Panc1 (cell line): ENCODE measurements at regions of chr17 and their contacts with region 1.

Region 1: GRCh38 chr17:59846394-59847165 is 46.2 kb downstream of the TUBD1 start:
- DNase-seq: peak; percentile 79
- ATAC-seq: peak; percentile 49
- H3K4me3 ChIP-seq: 0 out of 4 replicates have a peak overlapping the region, but pooled peaks of 1 of the 2 experiments have one; percentile 3
- H3K27ac ChIP-seq: peak overlapping the region; percentile 100
- H3K4me1 ChIP-seq: peaks cover 60% of the 10 kb centered on the region
- H3K27me3 ChIP-seq: no peaks in the 10 kb centered on the region
- CTCF ChIP-seq: no peak

Region 2: DNA sequence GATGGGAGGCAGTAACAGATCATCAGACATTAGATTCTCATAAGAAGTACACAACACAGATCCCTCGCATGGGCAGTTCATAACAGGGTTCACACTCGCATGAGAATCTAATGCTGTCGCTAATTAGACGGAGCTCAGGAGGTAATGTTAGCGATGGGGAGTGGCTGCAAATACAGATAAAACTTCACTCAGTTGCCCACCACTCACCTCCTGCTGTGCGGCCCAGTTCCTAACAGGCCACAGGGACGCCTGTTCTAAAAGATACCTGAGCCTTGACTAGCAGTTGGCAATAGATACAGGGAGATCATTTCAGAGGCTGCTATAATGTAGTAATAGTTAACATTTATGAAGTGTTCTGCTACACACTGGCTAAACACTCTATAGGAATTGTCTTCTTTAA is 144.3 kb before region 1 on chr17:
- CTCF ChIA-PET with region 1: no interaction called
- POLR2A ChIA-PET with region 1: interaction called, 5 read pairs
- in situ Hi-C with region 1: no loop called
- intact Hi-C with region 1: loop called (anchors 5 kb)
- DNase-seq: no peak
- ATAC-seq: no peak
- H3K4me3 ChIP-seq: no peak overlapping the region
- H3K27ac ChIP-seq: 0 out of 2 replicates have a peak overlapping the region, but pooled peaks have one; percentile 41
- H3K4me1 ChIP-seq: peaks cover 30% of the 10 kb centered on the region
- H3K27me3 ChIP-seq: no peaks in the 10 kb centered on the region
- CTCF ChIP-seq: no peak

Region 3: GRCh38 chr17:59753522-59754467 is 92.8 kb before region 1 on chr17:
- CTCF ChIA-PET with region 1: interaction called, 4 read pairs
- POLR2A ChIA-PET with region 1: interaction called, 7 read pairs
- in situ Hi-C with region 1: no loop called
- intact Hi-C with region 1: loop called (anchors 5 kb)
- DNase-seq: peak; percentile 83
- ATAC-seq: peak; percentile 64
- H3K4me3 ChIP-seq: no peak overlapping the region
- H3K27ac ChIP-seq: peak overlapping the region; percentile 100
- H3K4me1 ChIP-seq: peaks cover 63% of the 10 kb centered on the region
- H3K27me3 ChIP-seq: no peaks in the 10 kb centered on the region
- CTCF ChIP-seq: peak; percentile 67; the same call in 1 of the 2 replicates

Region 4: GRCh38 chr17:59769891-59770290 is 76.7 kb before region 1 on chr17:
- CTCF ChIA-PET with region 1: no interaction called
- POLR2A ChIA-PET with region 1: interaction called, 10 read pairs
- in situ Hi-C with region 1: no loop called
- intact Hi-C with region 1: no loop called
- DNase-seq: no peak
- ATAC-seq: 0 out of 2 replicates have a peak, but pooled peaks have one; percentile 26
- H3K4me3 ChIP-seq: no peak overlapping the region
- H3K27ac ChIP-seq: peak overlapping the region; percentile 89; the same call in 1 of the 2 replicates
- H3K4me1 ChIP-seq: peaks cover 21% of the 10 kb centered on the region
- H3K27me3 ChIP-seq: no peaks in the 10 kb centered on the region
- CTCF ChIP-seq: no peak

Region 5: GRCh38 chr17:59786536-59787319 is 59.9 kb before region 1 on chr17:
- CTCF ChIA-PET with region 1: no interaction called
- POLR2A ChIA-PET with region 1: interaction called, 12 read pairs
- in situ Hi-C with region 1: no loop called
- intact Hi-C with region 1: no loop called
- DNase-seq: peak; percentile 94
- ATAC-seq: peak; percentile 89
- H3K4me3 ChIP-seq: no peak overlapping the region
- H3K27ac ChIP-seq: peak overlapping the region; percentile 100
- H3K4me1 ChIP-seq: peaks cover 59% of the 10 kb centered on the region
- H3K27me3 ChIP-seq: no peaks in the 10 kb centered on the region
- CTCF ChIP-seq: no peak

Region 6: GRCh38 chr17:59867691-59868090 is 21.1 kb after region 1 on chr17:
- CTCF ChIA-PET with region 1: no interaction called
- POLR2A ChIA-PET with region 1: no interaction called
- in situ Hi-C with region 1: no loop called
- intact Hi-C with region 1: no loop called
- DNase-seq: no peak
- ATAC-seq: no peak
- H3K4me3 ChIP-seq: no peak overlapping the region
- H3K27ac ChIP-seq: peak overlapping the region; percentile 40
- H3K4me1 ChIP-seq: peaks cover 5% of the 10 kb centered on the region; the same call in 1 of the 2 replicates
- H3K27me3 ChIP-seq: no peaks in the 10 kb centered on the region
- CTCF ChIP-seq: no peak